Sciatic nerve (tissue), 2 donors: ENCODE measurements at regions of chr4 and their contacts with region 1.

Region 1: DNA sequence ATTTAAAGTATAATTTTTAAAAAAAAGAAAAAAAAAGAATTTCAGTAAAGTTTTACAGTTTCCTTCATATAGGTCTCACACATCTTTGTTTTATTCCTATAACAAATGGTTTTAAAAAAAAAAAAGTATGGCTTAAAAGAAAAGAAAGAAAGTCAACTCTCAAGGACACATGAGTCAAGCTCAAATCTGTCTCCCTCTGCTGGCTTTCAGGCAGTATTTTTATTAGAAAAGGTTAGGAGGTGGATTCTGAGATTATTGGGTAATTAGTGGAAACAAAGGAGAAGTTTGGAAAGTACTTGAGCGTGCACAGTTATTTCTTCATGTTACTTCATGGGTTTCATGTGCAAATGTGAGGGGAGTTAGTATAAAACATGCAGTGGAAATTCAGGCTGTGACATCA is 36.6 kb upstream of the BTC start:
- DNase-seq: no peak
- ATAC-seq: no peak

Region 2: DNA sequence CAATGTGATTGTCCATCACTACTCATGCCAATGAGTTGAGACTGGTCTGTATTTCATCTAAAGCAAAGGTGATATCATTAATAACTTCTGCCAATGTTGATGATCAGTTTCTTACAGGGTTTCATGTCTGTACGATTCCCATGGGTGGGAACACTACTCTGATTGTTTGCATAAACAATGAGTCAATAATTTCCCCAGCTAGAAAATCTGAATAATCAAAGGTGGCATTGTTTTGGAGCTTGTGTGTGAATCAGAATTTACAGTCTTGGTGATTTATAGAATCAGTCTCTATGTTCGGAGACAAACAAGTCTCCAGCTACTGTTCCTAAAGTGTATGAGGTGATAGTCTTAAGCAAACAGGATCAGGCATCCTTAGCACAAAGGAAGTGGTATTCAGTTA is 66.5 kb after region 1 on chr4:
- intact Hi-C with region 1: loop called (anchors 2 kb)
- DNase-seq: no peak
- ATAC-seq: no peak